Naive thymus-derived CD4-positive, alpha-beta T cell (primary cell): ENCODE measurements at regions of chr16 and their contacts with region 1.

Region 1: GRCh38 chr16:11639925-11640899 is 28.0 kb upstream of the SNN start:
- DNase-seq: no peak
- ATAC-seq: peak; percentile 89
- H3K4me3 ChIP-seq: no peak overlapping the region
- H3K4me3 Mint-ChIP-seq: peak overlapping the region in 2 of 10 donors; percentile 28 to 63
- H3K27ac ChIP-seq: no peak overlapping the region
- H3K27ac Mint-ChIP-seq: peak overlapping the region in 5 of 9 donors; percentile 14 to 82 (median 49)
- H3K4me1 ChIP-seq: peaks cover 11 to 14% of the 10 kb centered on the region in 2 donors
- H3K4me1 Mint-ChIP-seq: peaks cover 15 to 34% (median 22%) of the 10 kb centered on the region in 7 donors
- H3K27me3 ChIP-seq: no peaks in the 10 kb centered on the region
- H3K27me3 Mint-ChIP-seq: peaks cover 0 to 29% (median 0%) of the 10 kb centered on the region in 5 donors

Region 2: GRCh38 chr16:11407047-11407982 is 232.9 kb before region 1 on chr16:
- CTCF ChIA-PET with region 1: interaction called, 4 read pairs
- POLR2A ChIA-PET with region 1: no interaction called
- intact Hi-C with region 1: loop called in 1 of 2 experiments (anchors 2 kb)
- DNase-seq: peak; percentile 44 to 78 (median 66)
- ATAC-seq: peak; percentile 85
- H3K4me3 ChIP-seq: no peak overlapping the region
- H3K4me3 Mint-ChIP-seq: no peak overlapping the region
- H3K27ac ChIP-seq: no peak overlapping the region
- H3K27ac Mint-ChIP-seq: peak overlapping the region in 2 of 9 donors; percentile 16 to 72
- H3K4me1 ChIP-seq: no peaks in the 10 kb centered on the region
- H3K4me1 Mint-ChIP-seq: peaks cover 0 to 5% (median 4%) of the 10 kb centered on the region in 7 donors
- H3K27me3 ChIP-seq: no peaks in the 10 kb centered on the region
- H3K27me3 Mint-ChIP-seq: no peaks in the 10 kb centered on the region

Region 3: DNA sequence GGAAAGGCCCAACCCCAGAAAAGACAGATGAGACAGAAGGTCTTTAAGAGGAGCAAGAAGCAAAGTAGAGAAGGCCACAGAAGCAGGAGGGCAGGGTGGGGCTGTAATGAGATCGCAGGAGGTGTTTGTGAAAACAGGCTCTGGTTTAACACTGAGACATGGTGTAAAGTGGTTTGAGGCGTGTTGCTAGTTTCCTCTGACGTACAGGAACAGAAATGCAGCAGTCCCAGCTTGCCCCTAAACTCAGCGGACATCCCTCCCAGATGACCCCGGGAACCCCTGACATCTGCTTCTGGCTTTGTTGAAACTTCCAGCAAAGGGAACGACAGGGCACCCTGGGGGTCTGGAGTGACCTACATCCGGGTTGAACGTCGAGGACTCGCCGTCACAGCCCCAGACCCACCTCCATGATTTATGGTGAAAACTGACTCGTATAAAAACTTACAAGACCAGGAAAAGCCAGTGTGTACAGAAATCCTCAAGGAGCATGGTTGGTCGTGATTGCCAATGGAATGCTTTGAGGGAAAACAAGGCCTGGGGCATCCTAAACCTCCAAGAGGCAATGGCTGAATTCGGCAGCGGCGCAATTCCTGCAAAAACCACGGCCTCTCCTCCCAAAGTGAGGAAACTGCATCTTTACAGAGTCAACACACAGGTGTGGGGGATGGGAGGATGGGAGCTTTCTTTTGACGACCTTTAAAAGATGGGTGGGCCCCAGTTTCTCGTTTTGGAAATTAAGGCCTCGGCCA is 79.3 kb before region 1 on chr16:
- CTCF ChIA-PET with region 1: interaction called, 7 read pairs
- POLR2A ChIA-PET with region 1: interaction called, 9 read pairs
- intact Hi-C with region 1: loop called in 1 of 2 experiments (anchors 1 kb)
- DNase-seq: peak; percentile 41 to 92 (median 89)
- ATAC-seq: peak; percentile 92
- H3K4me3 ChIP-seq: peak overlapping the region; percentile 56
- H3K4me3 Mint-ChIP-seq: peak overlapping the region; percentile 79 to 97 (median 84)
- H3K27ac ChIP-seq: peak overlapping the region; percentile 89
- H3K27ac Mint-ChIP-seq: peak overlapping the region; percentile 92 to 99 (median 99)
- H3K4me1 ChIP-seq: peaks cover 70 to 85% of the 10 kb centered on the region in 2 donors
- H3K4me1 Mint-ChIP-seq: peaks cover 43 to 92% (median 78%) of the 10 kb centered on the region in 7 donors
- H3K27me3 ChIP-seq: no peaks in the 10 kb centered on the region
- H3K27me3 Mint-ChIP-seq: peaks cover 0 to 2% (median 0%) of the 10 kb centered on the region in 5 donors

Region 4: DNA sequence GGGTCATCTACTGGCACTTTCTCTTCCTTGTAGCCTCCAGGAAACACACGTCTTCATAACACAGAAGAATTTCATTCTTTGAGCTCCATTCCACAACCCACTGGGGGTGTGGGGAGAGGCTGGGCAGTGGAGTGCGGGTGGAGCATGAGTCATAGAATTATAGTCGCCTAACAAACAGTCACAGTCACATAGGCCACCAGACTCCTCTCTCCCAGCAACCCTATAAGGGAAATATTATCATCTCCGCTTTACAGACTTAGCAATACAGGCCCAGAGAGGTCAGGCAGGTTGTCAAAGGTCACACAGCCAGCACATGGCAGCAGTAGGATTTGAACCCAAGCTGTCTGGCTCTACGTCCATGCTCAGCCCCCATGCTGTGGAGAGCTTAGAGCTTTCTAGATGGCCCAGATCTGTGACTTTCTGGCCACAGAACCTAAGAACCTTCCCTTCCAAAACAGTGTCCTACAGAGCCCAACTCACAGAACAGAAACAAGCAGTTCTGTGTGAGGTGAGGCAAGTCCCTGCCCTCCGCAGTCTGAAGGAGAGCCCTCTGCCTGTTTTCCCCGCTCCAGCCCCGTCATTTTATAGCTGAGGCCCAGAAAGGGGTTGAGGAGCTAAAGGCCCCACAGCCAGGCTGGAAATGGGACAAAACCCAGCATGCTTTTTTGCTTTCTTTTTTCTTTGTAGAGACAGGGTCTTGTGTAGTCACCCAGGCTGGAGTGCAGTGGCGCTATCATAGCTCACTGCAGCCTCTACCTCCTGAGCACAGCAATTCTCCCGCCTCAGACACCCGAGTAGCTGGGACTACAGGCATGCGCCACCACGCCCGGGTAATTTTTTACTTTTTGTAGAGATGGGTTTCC is 42.7 kb before region 1 on chr16:
- CTCF ChIA-PET with region 1: interaction called, 3 read pairs
- POLR2A ChIA-PET with region 1: no interaction called
- intact Hi-C with region 1: loop called in 1 of 2 experiments (anchors 2 kb)
- DNase-seq: peak in 2 of 9 donors; percentile 24
- ATAC-seq: peak; percentile 85
- H3K4me3 ChIP-seq: no peak overlapping the region
- H3K4me3 Mint-ChIP-seq: peak overlapping the region in 4 of 10 donors; percentile 9 to 54 (median 14)
- H3K27ac ChIP-seq: peak overlapping the region; percentile 34
- H3K27ac Mint-ChIP-seq: peak overlapping the region; percentile 40 to 88 (median 81)
- H3K4me1 ChIP-seq: peaks cover 0 to 13% of the 10 kb centered on the region in 2 donors
- H3K4me1 Mint-ChIP-seq: peaks cover 8 to 26% (median 16%) of the 10 kb centered on the region in 7 donors
- H3K27me3 ChIP-seq: no peaks in the 10 kb centered on the region
- H3K27me3 Mint-ChIP-seq: peaks cover 0 to 5% (median 0%) of the 10 kb centered on the region in 5 donors

Region 5: GRCh38 chr16:11667824-11668622 is 27.8 kb after region 1 on chr16 and contains the start of gene SNN:
- CTCF ChIA-PET with region 1: interaction called, 11 read pairs
- POLR2A ChIA-PET with region 1: interaction called, 4 read pairs
- intact Hi-C with region 1: loop called in 1 of 2 experiments (anchors 1 kb)
- DNase-seq: peak; percentile 76 to 91 (median 83)
- ATAC-seq: peak; percentile 89
- H3K4me3 ChIP-seq: peak within 1 kb of the TSS; percentile 77
- H3K4me3 Mint-ChIP-seq: peak within 1 kb of the TSS; percentile 88 to 96 (median 91)
- H3K27ac ChIP-seq: peak within 1 kb of the TSS; percentile 85
- H3K27ac Mint-ChIP-seq: peak within 1 kb of the TSS; percentile 85 to 98 (median 96)
- H3K4me1 ChIP-seq: peaks cover 36 to 80% of the 10 kb centered on the region in 2 donors
- H3K4me1 Mint-ChIP-seq: peaks cover 53 to 87% (median 71%) of the 10 kb centered on the region in 7 donors
- H3K27me3 ChIP-seq: no peaks in the 10 kb centered on the region
- H3K27me3 Mint-ChIP-seq: no peaks in the 10 kb centered on the region
- total RNA-seq, gene SNN: 17.0 to 86.8 (median 34.4) TPM

Region 6: DNA sequence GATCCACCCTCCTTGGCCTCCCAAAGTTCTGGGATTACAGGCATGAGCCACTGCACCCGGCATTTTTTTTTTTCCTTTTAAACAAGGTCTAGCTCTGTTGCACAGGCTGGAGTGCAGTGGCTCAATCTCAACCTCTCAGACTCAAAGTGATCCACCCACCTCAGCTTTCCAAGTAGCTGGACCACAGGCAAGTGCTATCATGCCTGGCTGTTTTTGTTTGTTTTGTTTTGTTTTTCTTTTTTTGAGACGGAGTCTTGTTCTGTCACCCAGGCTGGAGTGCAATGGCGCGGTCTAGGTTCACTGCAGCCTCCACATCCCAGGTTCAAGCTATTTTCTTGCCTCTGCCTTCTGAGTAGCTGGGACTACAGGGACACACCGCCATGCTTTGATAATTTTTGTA is 175.9 kb after region 1 on chr16:
- CTCF ChIA-PET with region 1: interaction called, 4 read pairs
- POLR2A ChIA-PET with region 1: no interaction called
- intact Hi-C with region 1: loop called in 1 of 2 experiments (anchors 1 kb)
- DNase-seq: no peak
- ATAC-seq: no peak
- H3K4me3 ChIP-seq: no peak overlapping the region
- H3K4me3 Mint-ChIP-seq: no peak overlapping the region
- H3K27ac ChIP-seq: no peak overlapping the region
- H3K27ac Mint-ChIP-seq: no peak overlapping the region
- H3K4me1 ChIP-seq: no peaks in the 10 kb centered on the region
- H3K4me1 Mint-ChIP-seq: peaks cover 0 to 6% (median 3%) of the 10 kb centered on the region in 7 donors
- H3K27me3 ChIP-seq: no peaks in the 10 kb centered on the region
- H3K27me3 Mint-ChIP-seq: no peaks in the 10 kb centered on the region

Region 7: GRCh38 chr16:12934930-12935575 is 1294.8 kb after region 1 on chr16:
- CTCF ChIA-PET with region 1: no interaction called
- POLR2A ChIA-PET with region 1: no interaction called
- intact Hi-C with region 1: no loop called
- DNase-seq: no peak
- ATAC-seq: no peak
- H3K4me3 ChIP-seq: no peak overlapping the region
- H3K4me3 Mint-ChIP-seq: no peak overlapping the region
- H3K27ac ChIP-seq: no peak overlapping the region
- H3K27ac Mint-ChIP-seq: no peak overlapping the region
- H3K4me1 ChIP-seq: no peaks in the 10 kb centered on the region
- H3K4me1 Mint-ChIP-seq: no peaks in the 10 kb centered on the region
- H3K27me3 ChIP-seq: no peaks in the 10 kb centered on the region
- H3K27me3 Mint-ChIP-seq: peaks cover 0 to 49% (median 22%) of the 10 kb centered on the region in 5 donors